Dorsolateral prefrontal cortex (tissue), 120 donors: ENCODE measurements at regions of chr1 and their contacts with region 1.

Region 1: GRCh38 chr1:10980094-10980577 is 32.3 kb upstream of the TARDBP start:
- DNase-seq: peak; percentile 67 to 87 (median 82)
- H3K4me3 ChIP-seq: peak overlapping the region in 53 of 59 donors; percentile 1 to 68 (median 39)
- H3K27ac ChIP-seq: peak overlapping the region; percentile 45 to 98 (median 89)
- H3K27me3 ChIP-seq: no peaks in the 10 kb centered on the region
- CTCF ChIP-seq: peak in 39 of 56 donors; percentile 12 to 54 (median 36)

Region 2: DNA sequence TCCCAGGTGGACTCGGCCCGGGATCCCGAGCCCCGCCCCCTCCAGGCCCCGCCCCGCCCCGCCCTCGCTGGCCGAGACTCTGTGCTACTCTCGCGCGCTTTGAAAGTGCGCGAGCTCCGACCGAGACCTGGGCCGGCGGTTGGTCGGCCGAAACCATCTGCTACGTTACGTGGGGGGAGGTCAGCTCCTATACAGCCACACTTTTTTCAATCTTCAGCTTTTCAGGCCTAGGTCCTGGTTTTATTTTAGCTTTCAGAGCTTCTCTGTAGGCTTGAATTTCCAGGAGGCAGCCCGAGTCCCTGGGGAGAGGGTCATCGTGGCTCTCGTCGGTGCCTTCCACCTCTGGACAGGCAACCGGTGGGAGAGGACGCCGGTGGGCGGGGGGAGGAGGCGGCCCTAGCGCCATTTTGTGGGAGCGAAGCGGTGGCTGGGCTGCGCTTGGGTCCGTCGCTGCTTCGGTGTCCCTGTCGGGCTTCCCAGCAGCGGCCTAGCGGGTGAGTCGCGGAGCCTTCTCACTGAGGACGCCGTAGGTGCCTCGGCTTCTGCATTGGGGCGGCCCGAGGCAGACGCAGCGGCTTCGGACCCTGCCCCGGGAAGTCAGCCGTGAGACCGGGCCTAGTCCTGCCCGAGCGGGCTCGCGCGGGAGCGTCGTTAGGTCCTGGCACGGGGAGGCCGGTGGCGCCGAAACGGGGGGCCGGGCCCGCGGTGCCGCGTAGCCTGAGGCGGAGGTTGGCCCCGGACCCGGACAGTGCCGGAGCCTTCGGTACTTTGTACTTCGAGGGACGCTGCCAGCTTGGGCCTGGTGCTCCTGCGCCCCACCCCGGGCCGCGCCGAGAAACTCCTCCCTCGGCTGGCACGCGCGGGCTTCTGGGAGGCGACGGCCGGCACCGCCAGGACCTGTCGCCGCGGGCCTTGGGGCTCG is 32.4 kb after region 1 on chr1 and contains the start of gene TARDBP:
- intact Hi-C with region 1: loop called (anchors 1 kb)
- DNase-seq: peak; percentile 74 to 91 (median 85)
- H3K4me3 ChIP-seq: peak within 1 kb of the TSS; percentile 65 to 100 (median 97)
- H3K27ac ChIP-seq: peak within 1 kb of the TSS; percentile 83 to 100 (median 96)
- H3K27me3 ChIP-seq: no peaks in the 10 kb centered on the region
- CTCF ChIP-seq: peak in 6 of 56 donors; percentile 4 to 30 (median 6)
- total RNA-seq, gene TARDBP: 130 to 197 (median 159) TPM